PC-9 (cell line): ENCODE measurements at regions of chr14 and their contacts with region 1.

Region 1: DNA sequence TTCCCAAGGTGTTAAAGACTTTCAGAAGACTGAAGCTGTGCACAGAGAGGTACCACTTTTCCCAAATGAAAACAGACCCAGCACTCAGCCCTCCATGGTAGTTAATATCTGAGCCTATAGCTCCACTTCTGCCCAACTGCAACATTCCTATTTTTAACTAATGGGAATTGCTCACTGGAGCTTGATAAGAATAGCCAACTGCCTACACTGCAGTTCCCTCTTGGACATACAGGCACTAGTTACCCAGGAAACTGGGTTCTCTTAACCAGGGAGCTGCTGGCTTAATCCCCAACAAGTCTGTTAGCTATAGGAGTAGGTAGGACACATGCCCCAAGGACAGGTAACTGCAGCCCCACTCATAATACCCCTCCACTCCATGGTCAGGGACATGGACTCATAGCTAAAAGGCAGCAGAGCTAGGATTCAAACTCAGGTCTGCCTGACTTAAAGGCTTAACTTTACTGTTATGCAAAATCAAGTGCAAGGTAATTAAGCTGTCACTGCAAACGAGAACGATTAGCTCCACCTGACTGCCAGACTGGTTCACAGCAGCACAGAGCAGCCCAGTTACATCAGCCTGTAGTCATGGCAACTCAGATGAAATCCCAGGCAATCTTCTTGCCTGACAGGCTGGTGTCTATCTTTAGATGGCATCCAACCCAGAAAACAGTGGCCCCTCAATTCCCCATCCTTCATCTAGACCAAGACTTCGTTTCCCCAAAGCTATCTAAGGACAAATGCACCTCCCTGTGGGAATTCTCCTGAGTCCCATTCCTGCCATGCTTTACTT is 77.1 kb upstream of the ACTN1 start:
- DNase-seq: no peak
- H3K4me3 ChIP-seq: no peak overlapping the region
- H3K27ac ChIP-seq: no peak overlapping the region
- H3K4me1 ChIP-seq: peaks cover 3% of the 10 kb centered on the region
- H3K27me3 ChIP-seq: no peaks in the 10 kb centered on the region
- CTCF ChIP-seq: no peak

Region 2: DNA sequence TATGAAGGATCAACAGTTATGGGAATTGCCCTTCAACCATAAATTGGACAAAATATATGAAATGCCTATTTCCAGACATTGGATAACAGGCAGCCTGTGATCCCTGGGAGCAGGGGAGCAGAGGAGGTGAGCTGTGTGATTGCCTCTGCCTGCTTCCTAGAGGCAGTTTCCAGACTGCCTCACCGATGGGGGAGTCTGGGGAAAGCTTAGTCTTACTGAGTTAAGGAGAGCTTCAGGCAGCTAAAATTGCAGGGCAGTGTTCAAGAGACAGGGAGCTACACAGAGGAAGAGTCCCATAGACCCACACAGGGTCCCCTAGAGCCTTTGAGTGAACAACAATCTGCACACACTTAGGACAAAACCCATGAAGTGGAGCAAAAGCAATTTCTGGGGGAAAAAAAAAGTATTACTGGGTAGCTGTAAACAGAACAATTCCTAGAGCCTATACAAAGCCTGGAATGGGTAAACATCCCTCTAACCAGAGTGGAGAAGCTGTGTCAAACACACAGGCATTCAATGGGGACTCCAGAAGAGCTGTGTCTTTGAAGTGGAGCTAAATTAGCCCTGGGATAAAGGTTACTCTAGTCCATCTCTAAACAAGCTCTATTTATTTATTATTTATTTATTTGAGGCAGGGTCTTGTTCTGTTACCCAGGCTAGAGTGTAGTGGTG is 28.8 kb before region 1 on chr14:
- CTCF ChIA-PET with region 1: interaction called, 13 read pairs
- POLR2A ChIA-PET with region 1: no interaction called
- intact Hi-C with region 1: no loop called
- DNase-seq: no peak
- H3K4me3 ChIP-seq: no peak overlapping the region
- H3K27ac ChIP-seq: no peak overlapping the region
- H3K4me1 ChIP-seq: no peaks in the 10 kb centered on the region
- H3K27me3 ChIP-seq: no peaks in the 10 kb centered on the region
- CTCF ChIP-seq: no peak

Region 3: DNA sequence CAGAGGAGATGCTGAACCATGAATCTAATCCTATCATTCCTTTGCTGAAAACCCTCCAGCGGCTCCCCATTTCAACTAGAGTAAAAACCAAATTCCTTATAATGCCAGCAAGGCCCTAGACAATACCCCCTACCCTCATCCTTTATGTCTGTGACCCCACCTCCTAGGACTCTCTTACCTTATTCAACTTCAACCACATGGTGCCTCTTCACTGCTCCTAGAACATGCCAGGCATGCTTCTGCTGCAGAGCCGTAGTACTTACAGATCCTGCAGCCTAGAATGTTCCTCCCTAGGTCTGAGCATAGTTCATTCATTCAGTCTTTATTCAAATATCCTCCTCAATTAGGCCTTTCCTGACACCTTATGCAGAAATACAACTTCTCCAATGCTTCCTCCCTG is 41.8 kb after region 1 on chr14:
- CTCF ChIA-PET with region 1: no interaction called
- POLR2A ChIA-PET with region 1: interaction called, 10 read pairs
- intact Hi-C with region 1: no loop called
- DNase-seq: no peak
- H3K4me3 ChIP-seq: no peak overlapping the region
- H3K27ac ChIP-seq: no peak overlapping the region
- H3K4me1 ChIP-seq: peaks cover 20% of the 10 kb centered on the region
- H3K27me3 ChIP-seq: no peaks in the 10 kb centered on the region
- CTCF ChIP-seq: no peak

Region 4: GRCh38 chr14:69441948-69442347 is 385.8 kb after region 1 on chr14:
- CTCF ChIA-PET with region 1: no interaction called
- POLR2A ChIA-PET with region 1: no interaction called
- intact Hi-C with region 1: no loop called
- DNase-seq: no peak
- H3K4me3 ChIP-seq: no peak overlapping the region
- H3K27ac ChIP-seq: 0 out of 2 replicates have a peak overlapping the region, but pooled peaks have one; percentile 5
- H3K4me1 ChIP-seq: no peaks in the 10 kb centered on the region
- H3K27me3 ChIP-seq: no peaks in the 10 kb centered on the region
- CTCF ChIP-seq: no peak